Cardiac septum (tissue), 1 donor: ENCODE measurements at regions of chr1 and their contacts with region 1.

Region 1: DNA sequence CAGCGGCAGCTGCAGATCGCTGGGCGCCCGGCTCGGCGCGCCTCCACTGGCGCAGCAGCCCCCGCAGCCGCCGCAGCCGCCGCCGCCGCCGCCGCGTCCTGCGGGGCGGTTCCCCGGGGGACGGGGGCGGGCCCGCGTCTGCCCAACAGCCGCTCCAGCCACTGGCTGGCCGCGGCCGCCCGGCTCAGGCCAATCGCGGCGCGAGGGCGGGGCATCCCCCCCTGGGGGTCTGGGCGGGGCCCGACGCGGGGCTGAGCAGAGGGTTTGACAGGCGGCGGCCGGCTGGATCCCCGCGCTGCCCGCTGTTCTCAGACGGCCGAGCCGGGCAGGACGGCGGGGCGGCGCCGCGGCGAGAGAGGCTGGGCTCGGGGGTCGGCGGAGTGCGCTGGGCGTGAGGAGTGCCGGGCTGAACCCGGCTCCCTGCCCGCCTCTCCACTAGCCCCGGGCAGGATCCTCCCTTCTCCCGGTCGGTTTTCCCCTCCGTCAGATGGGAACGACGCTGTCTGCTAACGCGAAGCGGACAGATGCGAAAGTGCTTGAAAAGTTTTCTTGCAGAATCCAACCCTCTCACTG is at the start of gene GLIS1:
- DNase-seq: peak; percentile 88
- total RNA-seq, gene GLIS1: 0.30 TPM

Region 2: DNA sequence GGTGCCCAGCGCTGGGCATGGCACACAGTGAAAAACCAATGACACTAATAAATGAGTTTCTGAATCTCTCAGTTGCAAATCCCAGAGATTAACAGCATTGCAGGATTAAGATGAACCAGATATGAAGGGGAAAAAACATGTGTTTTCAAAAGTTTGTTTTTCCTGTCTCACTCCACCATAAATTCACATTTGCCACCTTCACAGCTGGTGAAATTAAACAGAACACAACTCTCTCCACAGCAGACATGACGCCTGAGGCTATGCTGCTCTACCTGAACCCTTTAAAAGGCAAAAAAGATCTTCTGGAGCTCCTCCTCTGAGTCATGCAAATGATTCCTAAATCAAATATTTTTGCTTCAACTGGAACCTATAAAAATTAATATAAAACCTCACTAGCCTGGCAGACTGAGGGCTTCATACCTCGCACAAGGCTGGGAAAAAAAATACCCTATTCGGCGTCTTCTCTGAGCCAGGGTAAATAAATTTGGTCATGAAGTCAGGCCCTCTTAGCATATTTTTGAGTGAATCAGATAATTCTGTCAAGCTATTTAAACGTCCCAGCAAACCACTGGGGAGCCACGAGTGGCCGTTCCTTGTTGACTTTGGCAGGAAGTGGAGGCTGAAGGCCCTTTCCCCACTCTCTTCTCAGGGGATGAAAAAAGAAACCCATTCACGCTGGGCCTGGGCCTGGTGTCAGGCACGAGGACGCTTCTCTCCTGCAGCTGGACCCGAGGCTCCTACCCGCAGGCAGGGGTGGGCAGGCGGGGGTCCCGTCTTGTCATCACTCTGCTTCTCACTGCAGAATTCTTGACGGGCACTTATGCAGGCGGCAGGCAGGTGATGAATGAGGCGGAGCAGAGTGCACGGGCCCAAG is 227.0 kb before region 1 on chr1:
- intact Hi-C with region 1: no loop called
- DNase-seq: no peak

Region 3: GRCh38 chr1:53592521-53592982 is 146.6 kb before region 1 on chr1:
- intact Hi-C with region 1: loop called (anchors 5 kb)
- DNase-seq: peak; percentile 79

Region 4: DNA sequence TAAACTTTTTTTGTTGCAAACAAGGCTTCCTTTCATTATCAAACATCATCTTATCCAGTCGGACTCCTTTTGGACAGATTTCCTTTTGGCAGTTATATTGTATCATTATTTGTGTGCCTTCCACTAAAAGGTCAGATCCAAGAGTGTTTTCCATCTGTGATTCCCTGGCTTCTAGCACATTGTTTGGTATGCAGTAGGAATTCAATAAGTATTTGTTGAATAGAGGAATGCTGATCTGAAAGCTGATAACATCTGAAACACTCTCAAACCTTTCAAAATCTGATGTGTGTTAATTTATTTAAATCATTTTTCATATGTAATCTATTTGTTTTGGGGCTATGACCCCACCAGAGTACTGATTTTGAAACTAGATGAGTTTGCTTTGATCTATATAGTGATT is 59.9 kb after region 1 on chr1:
- intact Hi-C with region 1: no loop called
- DNase-seq: no peak